Caco-2 (cell line): ENCODE measurements at regions of chr11 and their contacts with region 1.

Region 1: DNA sequence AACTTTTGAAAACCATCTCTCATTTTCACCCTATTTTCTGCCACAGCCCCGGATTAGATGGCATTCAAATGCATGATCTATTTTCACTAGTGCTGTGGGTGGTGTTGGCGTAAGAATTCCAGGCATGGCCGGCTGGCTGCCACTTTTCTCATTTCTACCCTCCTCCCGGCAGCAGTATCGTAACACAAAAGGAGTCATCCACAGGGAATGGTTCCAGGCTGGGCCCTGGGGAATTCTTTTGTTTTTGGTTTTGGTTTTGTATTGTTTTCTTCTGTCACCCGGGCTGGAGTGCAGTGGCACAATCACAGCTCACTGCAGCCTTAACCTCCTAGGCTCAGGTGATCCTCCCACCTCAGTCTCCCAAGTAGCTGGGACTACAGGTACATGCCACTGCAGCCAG is 13.8 kb downstream of the JAML start:
- DNase-seq: no peak
- H3K4me3 ChIP-seq: no peak overlapping the region
- H3K4me3 Mint-ChIP-seq: no peak overlapping the region
- H3K27ac Mint-ChIP-seq: peak overlapping the region; percentile 67
- H3K4me1 ChIP-seq: peaks cover 78% of the 10 kb centered on the region
- H3K4me1 Mint-ChIP-seq: peaks cover 53% of the 10 kb centered on the region
- H3K27me3 ChIP-seq: no peaks in the 10 kb centered on the region
- H3K27me3 Mint-ChIP-seq: no peaks in the 10 kb centered on the region
- CTCF ChIP-seq: no peak

Region 2: DNA sequence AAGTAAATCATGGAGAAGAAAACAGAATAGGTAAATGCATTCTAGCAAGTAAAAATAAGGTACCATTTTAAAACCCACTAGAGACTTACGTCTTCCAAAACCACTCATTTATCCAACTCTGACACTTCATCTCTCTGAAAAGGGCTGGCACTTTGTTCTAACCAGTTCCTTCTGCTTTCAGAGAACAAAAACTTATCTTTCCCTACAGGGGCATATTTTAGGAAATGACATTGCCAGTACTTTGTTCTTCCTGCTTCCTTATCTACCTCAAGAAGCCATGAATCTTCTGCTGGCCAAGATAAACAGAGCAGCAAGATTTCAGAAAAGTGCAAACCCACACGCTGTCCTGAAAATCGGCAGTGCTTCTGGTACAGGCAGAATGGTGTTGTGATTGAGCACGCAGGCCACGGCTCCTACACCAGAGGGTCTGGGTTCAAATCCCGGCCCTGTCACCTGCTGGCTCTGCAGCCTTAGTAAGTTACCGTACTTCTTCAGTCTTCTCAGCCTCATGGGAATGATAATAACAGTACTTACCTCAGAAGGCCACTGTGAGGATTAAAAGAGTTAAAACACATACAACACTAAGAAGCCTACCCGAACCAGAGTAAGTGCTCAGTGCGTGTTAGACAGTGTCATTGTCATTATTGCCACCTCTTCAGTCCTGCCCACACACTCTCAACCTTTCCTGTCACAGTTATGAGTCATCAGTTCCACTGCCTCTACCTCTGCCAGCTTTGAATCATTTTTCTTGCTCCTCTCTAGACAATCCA is 30.2 kb after region 1 on chr11:
- CTCF ChIA-PET with region 1: interaction called, 9 read pairs
- POLR2A ChIA-PET with region 1: interaction called, 4 read pairs
- intact Hi-C with region 1: loop called (anchors 1 kb)
- DNase-seq: peak; percentile 68 to 71
- H3K4me3 ChIP-seq: no peak overlapping the region
- H3K4me3 Mint-ChIP-seq: peak overlapping the region; percentile 42
- H3K27ac Mint-ChIP-seq: peak overlapping the region; percentile 82
- H3K4me1 ChIP-seq: peaks cover 69% of the 10 kb centered on the region
- H3K4me1 Mint-ChIP-seq: peaks cover 65% of the 10 kb centered on the region
- H3K27me3 ChIP-seq: no peaks in the 10 kb centered on the region
- H3K27me3 Mint-ChIP-seq: no peaks in the 10 kb centered on the region
- CTCF ChIP-seq: no peak

Region 3: GRCh38 chr11:118251858-118252652 is 41.0 kb after region 1 on chr11 and contains the start of gene MPZL3:
- CTCF ChIA-PET with region 1: interaction called, 7 read pairs
- POLR2A ChIA-PET with region 1: interaction called, 16 read pairs
- intact Hi-C with region 1: loop called (anchors 1 kb)
- DNase-seq: peak; percentile 97 to 99
- H3K4me3 ChIP-seq: peak within 1 kb of the TSS; percentile 65
- H3K4me3 Mint-ChIP-seq: peak within 1 kb of the TSS; percentile 85
- H3K27ac Mint-ChIP-seq: peak within 1 kb of the TSS; percentile 98
- H3K4me1 ChIP-seq: peaks cover 11% of the 10 kb centered on the region
- H3K4me1 Mint-ChIP-seq: peaks cover 24% of the 10 kb centered on the region
- H3K27me3 ChIP-seq: no peaks in the 10 kb centered on the region
- H3K27me3 Mint-ChIP-seq: no peaks in the 10 kb centered on the region
- CTCF ChIP-seq: peak in 1 of 2 experiments; percentile 20
- total RNA-seq, gene MPZL3: 29.6 and 31.8 TPM in 2 replicates

Region 4: DNA sequence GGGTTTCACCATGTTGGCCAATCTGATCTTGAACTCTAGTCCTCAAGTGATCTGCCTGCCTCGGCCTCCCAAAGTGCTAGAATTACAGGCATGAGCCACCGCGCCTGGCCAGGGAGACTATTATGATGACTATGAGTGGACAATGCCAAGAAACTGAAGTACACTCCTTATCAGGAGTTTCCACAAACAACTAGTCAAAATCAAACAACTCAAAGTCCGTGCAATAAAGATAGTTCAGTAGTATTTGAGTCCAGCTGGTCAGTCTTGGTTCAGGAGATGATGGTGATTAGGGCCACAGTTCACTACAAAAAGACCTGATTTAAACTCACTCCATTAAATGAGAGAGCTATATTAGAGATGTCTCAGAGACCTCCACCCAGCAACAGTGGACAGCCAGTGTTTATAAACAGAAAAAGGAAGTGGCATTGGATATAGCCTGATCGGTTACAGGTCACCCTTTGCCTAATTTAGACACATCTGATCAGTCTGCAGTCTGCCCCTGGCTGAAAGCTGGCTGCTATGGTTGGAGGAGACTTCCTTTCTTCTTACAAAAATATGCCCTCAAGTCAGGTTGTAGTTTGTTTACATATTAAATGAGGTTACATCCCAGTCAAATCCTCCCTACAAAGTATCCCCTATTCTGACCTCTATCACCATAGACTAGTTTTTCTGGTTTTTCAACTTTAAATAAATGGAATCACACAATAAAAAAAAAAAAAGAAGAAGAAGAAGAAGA is 110.5 kb after region 1 on chr11:
- CTCF ChIA-PET with region 1: no interaction called
- POLR2A ChIA-PET with region 1: no interaction called
- intact Hi-C with region 1: loop called (anchors 1 kb)
- DNase-seq: peak; percentile 84
- H3K4me3 ChIP-seq: no peak overlapping the region
- H3K4me3 Mint-ChIP-seq: peak overlapping the region; percentile 59
- H3K27ac Mint-ChIP-seq: peak overlapping the region; percentile 83
- H3K4me1 ChIP-seq: peaks cover 64% of the 10 kb centered on the region
- H3K4me1 Mint-ChIP-seq: peaks cover 41% of the 10 kb centered on the region
- H3K27me3 ChIP-seq: no peaks in the 10 kb centered on the region
- H3K27me3 Mint-ChIP-seq: no peaks in the 10 kb centered on the region
- CTCF ChIP-seq: no peak